Left colon (tissue), 2 donors: ENCODE measurements at regions of chrX and their contacts with region 1.

Region 1: GRCh38 chrX:24371391-24371972 is 11.0 kb downstream of the SUPT20HL1 start:
- DNase-seq: peak; percentile 53 to 68
- ATAC-seq: peak; percentile 61

Region 2: GRCh38 chrX:24034485-24034884 is 337.0 kb before region 1 on chrX:
- intact Hi-C with region 1: no loop called
- DNase-seq: no peak
- ATAC-seq: no peak

Region 3: DNA sequence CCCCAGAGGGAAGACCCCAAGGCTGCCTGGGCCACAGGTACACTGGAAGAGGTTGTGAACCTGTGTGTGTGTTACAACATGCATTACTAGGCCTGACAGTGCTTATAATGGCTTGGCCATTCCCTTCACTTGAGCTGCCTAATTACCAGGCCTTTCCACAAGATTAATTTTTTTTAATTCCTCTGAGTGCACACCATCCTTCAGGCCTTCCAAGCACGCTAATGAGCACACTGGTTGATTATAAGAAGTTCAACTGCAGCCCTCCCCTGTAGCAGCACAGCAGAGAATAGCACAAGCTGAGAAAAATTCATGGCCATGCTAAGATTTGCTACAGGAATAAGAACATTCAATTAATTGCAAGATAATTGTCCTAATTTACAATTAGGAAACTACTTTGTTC is 55.4 kb before region 1 on chrX:
- intact Hi-C with region 1: no loop called
- DNase-seq: no peak
- ATAC-seq: no peak

Region 4: DNA sequence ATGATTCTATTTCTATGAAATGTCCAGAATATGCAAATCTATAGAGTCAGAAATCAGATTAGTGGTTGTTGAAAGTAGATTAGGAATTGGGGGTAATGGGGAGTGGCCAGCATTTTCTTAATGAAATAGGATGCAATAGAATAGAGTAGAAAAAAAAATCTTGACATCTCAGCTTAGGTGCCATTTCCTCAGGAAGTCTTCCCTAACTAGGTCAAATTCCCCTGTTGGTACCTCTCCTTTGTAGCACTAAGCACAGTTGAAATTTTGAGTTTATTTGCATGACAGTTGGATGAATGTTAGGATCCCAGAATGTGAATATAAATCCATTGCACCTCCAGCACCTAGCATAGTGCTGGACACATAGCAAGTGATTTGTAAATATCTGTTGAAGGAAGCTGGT is 63.6 kb after region 1 on chrX:
- intact Hi-C with region 1: loop called in 1 of 2 experiments (anchors 10 kb)
- DNase-seq: no peak
- ATAC-seq: no peak

Region 5: DNA sequence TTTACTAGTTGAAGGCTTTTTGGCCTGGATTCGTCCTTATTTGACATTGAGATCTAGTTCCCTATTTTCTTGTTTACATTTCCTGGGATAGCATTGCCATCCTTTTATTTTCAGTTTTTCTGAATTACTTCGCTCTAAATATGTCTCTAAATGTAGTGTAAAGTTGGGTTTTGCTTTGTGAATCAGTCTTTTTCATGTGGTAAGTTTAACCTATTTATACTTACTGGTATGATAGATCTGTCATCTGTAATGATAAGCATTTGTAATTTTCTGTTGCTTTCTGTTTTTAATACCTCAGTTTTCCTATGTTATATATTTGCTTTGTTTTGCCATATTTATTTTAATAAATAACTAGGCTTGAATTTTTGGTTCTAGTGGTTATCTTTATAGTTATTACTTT is 100.3 kb after region 1 on chrX:
- intact Hi-C with region 1: no loop called
- DNase-seq: no peak
- ATAC-seq: no peak

Region 6: GRCh38 chrX:24506055-24506454 is 134.6 kb after region 1 on chrX:
- intact Hi-C with region 1: loop called in 1 of 2 experiments (anchors 10 kb)
- DNase-seq: no peak
- ATAC-seq: no peak

Region 7: DNA sequence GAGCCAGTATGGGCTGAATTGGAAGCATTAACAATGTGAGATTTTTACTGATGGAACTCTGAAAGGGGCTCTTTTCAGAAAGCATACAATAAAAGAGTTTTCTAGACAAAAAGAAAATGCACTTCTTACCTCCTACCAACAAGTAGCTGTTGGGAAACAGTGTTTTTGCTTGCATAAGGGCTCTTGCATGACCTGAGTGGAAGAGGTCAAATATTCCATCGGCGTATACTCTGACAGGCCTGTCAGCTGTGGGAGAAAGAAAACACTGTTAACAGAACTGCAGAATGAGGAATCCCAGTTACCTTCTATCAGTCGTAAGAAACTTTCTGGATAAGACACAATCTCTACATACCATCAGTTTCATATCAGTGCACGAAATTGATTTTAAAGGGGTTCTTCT is 236.1 kb after region 1 on chrX:
- intact Hi-C with region 1: no loop called
- DNase-seq: no peak
- ATAC-seq: no peak